PC-9 (cell line): ENCODE measurements at regions of chr1 and their contacts with region 1.

Region 1: GRCh38 chr1:222829868-222830267 is 15.0 kb downstream of the DISP1 start:
- DNase-seq: no peak
- H3K4me3 ChIP-seq: no peak overlapping the region
- H3K27ac ChIP-seq: no peak overlapping the region
- H3K4me1 ChIP-seq: peaks cover 14% of the 10 kb centered on the region
- H3K27me3 ChIP-seq: no peaks in the 10 kb centered on the region
- CTCF ChIP-seq: no peak

Region 2: DNA sequence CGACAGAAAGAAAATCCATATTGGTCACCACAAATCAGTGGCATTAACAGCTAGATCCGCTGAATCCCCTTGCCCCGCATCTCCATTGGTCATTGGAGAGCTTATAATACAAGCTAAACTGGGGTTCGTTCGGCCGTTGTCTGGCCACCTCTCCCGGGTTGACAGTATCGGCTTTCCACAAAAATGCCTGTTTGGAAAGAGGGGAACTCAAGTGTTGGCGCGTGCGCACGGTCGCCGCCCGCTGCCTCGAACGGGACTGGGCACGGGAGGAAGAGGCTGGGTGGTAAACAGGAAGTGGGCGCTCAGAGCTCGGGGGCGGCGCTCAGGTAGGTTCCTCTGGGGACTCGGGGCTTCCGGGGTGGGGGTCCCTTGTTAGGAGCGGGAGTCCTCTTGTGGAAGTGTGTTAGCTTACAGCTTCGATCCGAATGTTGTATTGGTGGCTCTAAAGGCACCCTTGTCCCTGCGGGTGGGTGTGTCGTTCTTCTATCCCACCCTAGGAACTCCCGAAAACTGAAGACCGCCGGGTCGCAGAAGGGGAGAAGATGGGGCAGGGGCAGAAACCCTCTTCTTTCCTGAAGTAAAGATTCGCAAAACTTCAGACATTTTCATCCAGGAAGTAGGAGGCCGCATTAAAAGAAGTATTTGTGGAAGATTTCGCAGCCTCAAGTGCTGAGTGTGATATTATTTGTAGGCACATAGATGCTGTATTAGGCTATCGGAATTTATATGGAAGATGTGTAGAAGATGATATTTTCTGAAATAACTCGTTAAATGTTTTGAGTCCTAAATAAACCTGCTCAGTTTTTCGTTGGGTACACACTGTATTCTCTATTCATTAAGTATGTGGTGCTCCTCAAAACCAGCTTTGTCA is 116.5 kb before region 1 on chr1:
- CTCF ChIA-PET with region 1: interaction called, 14 read pairs
- POLR2A ChIA-PET with region 1: no interaction called
- intact Hi-C with region 1: no loop called
- DNase-seq: peak; percentile 84 to 93
- H3K4me3 ChIP-seq: peak overlapping the region; percentile 89
- H3K27ac ChIP-seq: peak overlapping the region; percentile 87
- H3K4me1 ChIP-seq: peaks cover 15% of the 10 kb centered on the region
- H3K27me3 ChIP-seq: no peaks in the 10 kb centered on the region
- CTCF ChIP-seq: no peak